ENCODE measurements at regions of chr1 and their contacts with region 1.

Region 1: GRCh38 chr1:111507411-111508201 is 4.2 kb upstream of the ADORA3 start:
- DNase-seq: peak in 13 of 14 experiments; percentile 43 to 83 (median 54)
- ATAC-seq: peak; percentile 49
- H3K4me3 ChIP-seq: peak overlapping the region; percentile 46
- H3K4me3 Mint-ChIP-seq: peak overlapping the region; percentile 84
- H3K27ac ChIP-seq: peak overlapping the region; percentile 83 to 90
- H3K27ac Mint-ChIP-seq: no peak overlapping the region
- H3K4me1 ChIP-seq: peaks cover 97% of the 10 kb centered on the region
- H3K4me1 Mint-ChIP-seq: peaks cover 55% of the 10 kb centered on the region
- H3K27me3 ChIP-seq: no peaks in the 10 kb centered on the region
- H3K27me3 Mint-ChIP-seq: no peaks in the 10 kb centered on the region
- CTCF ChIP-seq: no peak

Region 2: DNA sequence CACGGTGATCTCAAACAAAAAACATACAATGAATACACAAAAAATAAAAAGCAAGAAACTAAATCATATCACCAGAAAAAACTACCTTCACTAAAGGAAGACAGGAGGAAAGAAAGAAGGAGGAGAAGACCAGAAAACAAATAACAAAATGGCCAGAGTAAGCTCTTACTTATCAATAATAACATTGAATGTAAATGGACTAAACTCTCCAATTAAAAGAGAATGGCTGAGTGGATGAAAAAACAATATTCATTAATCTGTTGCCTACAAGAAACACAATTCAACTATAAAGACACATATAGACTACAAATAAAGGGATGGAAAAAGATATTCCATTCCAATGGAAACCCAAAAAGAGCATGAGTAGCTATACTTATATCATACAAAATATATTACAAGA is 571.0 kb before region 1 on chr1:
- CTCF ChIA-PET with region 1: no interaction called
- POLR2A ChIA-PET with region 1: no interaction called
- intact Hi-C with region 1: no loop called
- DNase-seq: no peak
- ATAC-seq: no peak
- H3K4me3 ChIP-seq: no peak overlapping the region
- H3K4me3 Mint-ChIP-seq: no peak overlapping the region
- H3K27ac ChIP-seq: no peak overlapping the region
- H3K27ac Mint-ChIP-seq: no peak overlapping the region
- H3K4me1 ChIP-seq: no peaks in the 10 kb centered on the region
- H3K4me1 Mint-ChIP-seq: no peaks in the 10 kb centered on the region
- H3K27me3 ChIP-seq: no peaks in the 10 kb centered on the region
- H3K27me3 Mint-ChIP-seq: no peaks in the 10 kb centered on the region
- CTCF ChIP-seq: no peak

Region 3: GRCh38 chr1:111471012-111471411 is 36.6 kb before region 1 on chr1:
- CTCF ChIA-PET with region 1: interaction called, 7 read pairs
- POLR2A ChIA-PET with region 1: interaction called, 81 read pairs
- intact Hi-C with region 1: loop called (anchors 5 kb)
- DNase-seq: peak; percentile 40 to 94 (median 62)
- ATAC-seq: peak; percentile 92
- H3K4me3 ChIP-seq: peak overlapping the region; percentile 38
- H3K4me3 Mint-ChIP-seq: no peak overlapping the region
- H3K27ac ChIP-seq: peak overlapping the region; percentile 75 to 84
- H3K27ac Mint-ChIP-seq: no peak overlapping the region
- H3K4me1 ChIP-seq: peaks cover 57% of the 10 kb centered on the region
- H3K4me1 Mint-ChIP-seq: peaks cover 24% of the 10 kb centered on the region
- H3K27me3 ChIP-seq: no peaks in the 10 kb centered on the region
- H3K27me3 Mint-ChIP-seq: no peaks in the 10 kb centered on the region
- CTCF ChIP-seq: no peak

Region 4: DNA sequence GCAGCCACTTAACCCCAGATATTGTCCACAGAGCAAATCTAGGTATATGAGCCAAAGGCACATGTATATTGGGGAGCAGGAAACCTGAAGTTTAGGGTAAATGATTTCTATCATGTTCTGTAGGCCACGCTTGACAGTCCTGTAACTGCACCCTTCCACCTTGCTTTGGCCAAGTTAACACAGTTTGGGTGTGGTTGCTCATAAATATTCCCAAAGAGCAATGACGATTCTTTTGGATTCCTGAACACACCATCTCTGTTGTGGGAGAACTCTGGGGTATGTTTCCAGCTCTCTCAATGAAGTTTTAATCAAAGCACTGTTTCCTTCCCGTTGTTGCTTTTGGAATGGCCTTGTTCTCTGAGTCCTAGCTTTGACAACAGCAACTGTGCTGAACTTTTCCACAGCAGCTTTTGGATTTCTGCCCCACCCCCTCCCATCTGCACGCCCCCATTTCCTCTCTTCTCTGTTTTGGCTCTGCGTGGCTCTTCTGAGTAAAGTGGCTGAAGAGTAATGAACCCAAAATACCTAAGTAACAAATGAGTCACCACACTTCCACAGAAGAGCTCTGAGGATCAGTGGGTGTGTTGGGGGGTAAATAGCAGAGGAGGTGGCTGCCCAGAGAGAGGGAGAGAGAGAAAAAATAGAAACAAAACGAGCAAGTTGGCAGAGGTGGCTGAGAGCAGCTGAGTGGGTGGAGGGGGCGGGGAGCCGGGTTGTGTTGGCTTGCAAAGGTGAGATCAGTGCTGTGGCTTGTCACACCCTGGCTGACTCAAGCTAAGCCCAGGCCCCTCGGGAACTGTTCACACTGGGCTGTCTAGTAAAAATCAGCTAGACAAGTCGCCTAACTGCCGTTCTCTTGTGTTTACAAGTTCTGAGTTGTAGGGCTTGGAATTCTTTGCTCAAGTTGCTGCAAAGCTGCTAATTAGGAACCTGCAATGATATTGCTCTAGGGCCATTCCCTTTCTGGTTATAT is 85.1 kb after region 1 on chr1:
- CTCF ChIA-PET with region 1: interaction called, 17 read pairs
- POLR2A ChIA-PET with region 1: interaction called, 13 read pairs
- intact Hi-C with region 1: no loop called
- DNase-seq: peak; percentile 66 to 96 (median 88)
- ATAC-seq: peak; percentile 92
- H3K4me3 ChIP-seq: no peak overlapping the region
- H3K4me3 Mint-ChIP-seq: peak overlapping the region; percentile 49
- H3K27ac ChIP-seq: peak overlapping the region; percentile 43 to 64
- H3K27ac Mint-ChIP-seq: peak overlapping the region; percentile 79
- H3K4me1 ChIP-seq: peaks cover 54% of the 10 kb centered on the region
- H3K4me1 Mint-ChIP-seq: peaks cover 59% of the 10 kb centered on the region
- H3K27me3 ChIP-seq: no peaks in the 10 kb centered on the region
- H3K27me3 Mint-ChIP-seq: no peaks in the 10 kb centered on the region
- CTCF ChIP-seq: no peak

Region 5: GRCh38 chr1:111656086-111657017 is 148.7 kb after region 1 on chr1:
- CTCF ChIA-PET with region 1: interaction called, 7 read pairs
- POLR2A ChIA-PET with region 1: interaction called, 9 read pairs
- intact Hi-C with region 1: loop called (anchors 1 to 2 kb)
- DNase-seq: peak in 4 of 14 experiments; percentile 36 to 69 (median 57)
- ATAC-seq: no peak
- H3K4me3 ChIP-seq: no peak overlapping the region
- H3K4me3 Mint-ChIP-seq: peak overlapping the region; percentile 18
- H3K27ac ChIP-seq: no peak overlapping the region
- H3K27ac Mint-ChIP-seq: peak overlapping the region; percentile 13
- H3K4me1 ChIP-seq: peaks cover 30% of the 10 kb centered on the region
- H3K4me1 Mint-ChIP-seq: peaks cover 56% of the 10 kb centered on the region
- H3K27me3 ChIP-seq: no peaks in the 10 kb centered on the region
- H3K27me3 Mint-ChIP-seq: no peaks in the 10 kb centered on the region
- CTCF ChIP-seq: peak; percentile 64

Region 6: DNA sequence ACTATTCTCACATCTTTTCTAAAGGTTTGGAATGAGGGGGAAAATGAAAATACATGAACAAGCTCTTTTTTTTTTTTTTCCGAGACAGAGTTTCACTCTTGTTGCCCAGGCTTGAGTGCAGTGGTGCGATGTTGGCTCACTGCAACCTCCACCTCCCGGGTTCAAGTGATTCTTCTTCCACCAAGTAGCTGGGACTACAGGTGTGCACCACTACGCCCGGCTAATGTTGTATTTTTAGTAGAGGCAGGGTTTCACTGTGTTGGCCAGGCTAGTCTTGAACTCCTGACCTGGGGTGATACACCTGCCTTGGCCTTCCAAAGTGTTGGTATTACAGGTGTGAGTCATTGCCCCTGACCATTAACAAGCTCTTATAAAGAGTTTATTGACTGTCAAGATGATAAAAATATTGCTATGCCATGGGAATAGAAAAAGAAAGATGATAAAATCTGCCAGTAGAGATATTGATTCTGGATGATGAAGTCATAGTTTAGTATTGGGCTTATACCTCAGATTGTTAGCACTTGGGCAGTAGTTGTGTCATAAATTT is 195.0 kb after region 1 on chr1:
- CTCF ChIA-PET with region 1: interaction called, 11 read pairs
- POLR2A ChIA-PET with region 1: interaction called, 3 read pairs
- intact Hi-C with region 1: no loop called
- DNase-seq: no peak
- ATAC-seq: no peak
- H3K4me3 ChIP-seq: no peak overlapping the region
- H3K4me3 Mint-ChIP-seq: no peak overlapping the region
- H3K27ac ChIP-seq: no peak overlapping the region
- H3K27ac Mint-ChIP-seq: peak overlapping the region; percentile 34
- H3K4me1 ChIP-seq: no peaks in the 10 kb centered on the region
- H3K4me1 Mint-ChIP-seq: peaks cover 11% of the 10 kb centered on the region
- H3K27me3 ChIP-seq: no peaks in the 10 kb centered on the region
- H3K27me3 Mint-ChIP-seq: no peaks in the 10 kb centered on the region
- CTCF ChIP-seq: no peak

Region 7: DNA sequence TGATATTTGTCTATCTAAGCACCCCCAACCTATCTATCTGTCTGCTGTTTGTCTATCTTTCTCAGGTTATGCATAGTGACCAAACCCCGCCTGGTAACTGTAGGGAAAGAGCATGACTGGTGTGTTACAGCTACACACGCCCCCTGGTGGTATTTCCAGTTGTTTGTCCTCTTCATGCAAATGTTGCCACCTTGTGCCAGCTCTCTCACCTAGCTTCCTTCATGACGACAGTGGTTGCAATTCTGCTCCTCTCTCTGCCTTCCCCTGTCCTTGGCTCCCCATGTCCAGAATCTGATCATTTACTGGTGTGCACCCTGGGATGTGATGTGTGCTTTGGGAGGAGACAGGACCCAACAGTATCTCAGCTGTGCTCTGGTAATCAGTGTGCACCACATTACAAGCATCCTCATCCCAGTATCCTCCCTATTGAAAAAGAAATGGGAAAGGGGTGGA is 239.7 kb after region 1 on chr1:
- CTCF ChIA-PET with region 1: interaction called, 6 read pairs
- POLR2A ChIA-PET with region 1: no interaction called
- intact Hi-C with region 1: loop called in 1 of 2 experiments (anchors 5 kb)
- DNase-seq: peak; percentile 19 to 86 (median 45)
- ATAC-seq: peak; percentile 66
- H3K4me3 ChIP-seq: no peak overlapping the region
- H3K4me3 Mint-ChIP-seq: no peak overlapping the region
- H3K27ac ChIP-seq: no peak overlapping the region
- H3K27ac Mint-ChIP-seq: no peak overlapping the region
- H3K4me1 ChIP-seq: no peaks in the 10 kb centered on the region
- H3K4me1 Mint-ChIP-seq: no peaks in the 10 kb centered on the region
- H3K27me3 ChIP-seq: no peaks in the 10 kb centered on the region
- H3K27me3 Mint-ChIP-seq: no peaks in the 10 kb centered on the region
- CTCF ChIP-seq: peak; percentile 49